BJ (cell line): ENCODE measurements at regions of chr12 and their contacts with region 1.

Region 1: DNA sequence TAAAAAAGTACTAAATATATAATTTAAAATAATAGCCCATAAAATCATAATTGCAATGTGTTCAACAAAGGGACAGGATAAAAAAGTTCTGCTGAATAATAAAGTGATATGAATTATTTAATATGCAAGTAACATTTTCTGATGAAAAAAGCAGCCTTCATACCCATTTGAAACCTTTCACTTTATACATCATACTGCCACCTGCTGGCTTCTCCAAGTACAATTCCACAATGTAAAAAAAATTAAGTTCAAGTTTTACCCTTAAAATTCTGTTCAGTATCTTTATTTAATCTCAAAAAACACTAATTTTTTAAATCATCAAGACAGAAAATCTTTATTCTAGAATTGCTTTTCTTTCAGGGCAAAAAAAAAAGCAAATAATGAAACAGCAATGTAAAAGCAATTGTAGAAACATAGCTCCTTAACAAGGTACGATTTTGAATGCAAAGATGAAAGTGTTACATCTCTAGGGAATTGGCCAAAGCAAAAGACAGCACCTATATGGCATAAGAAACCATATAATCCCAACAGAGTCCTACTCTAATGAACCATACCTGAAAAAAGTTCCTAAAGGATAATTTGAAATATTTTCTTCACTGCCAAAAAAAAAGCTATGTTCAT is 15.0 kb downstream of the MDM1 start:
- DNase-seq: no peak
- H3K4me3 ChIP-seq: no peak overlapping the region
- H3K27me3 ChIP-seq: no peaks in the 10 kb centered on the region
- CTCF ChIP-seq: peak; percentile 52

Region 2: DNA sequence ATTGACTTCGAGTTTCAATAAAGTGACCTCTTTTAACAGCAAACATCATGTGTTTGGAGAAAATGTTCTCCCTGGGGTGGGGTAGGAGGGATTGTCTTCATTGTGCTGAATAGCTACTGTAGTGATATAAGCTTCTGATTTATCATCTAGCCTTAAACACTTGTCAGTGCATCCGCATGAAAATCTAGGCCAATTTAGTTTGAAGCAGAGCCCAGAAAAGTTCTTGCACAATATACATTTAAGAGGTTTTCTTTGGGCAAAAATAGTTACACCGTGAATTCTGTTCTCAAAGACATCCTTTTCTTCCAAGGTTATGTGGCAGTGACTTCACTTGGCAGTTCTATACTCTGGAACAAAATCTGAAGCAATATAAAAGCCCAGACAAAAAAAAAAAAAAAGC is 464.0 kb before region 1 on chr12:
- CTCF ChIA-PET with region 1: no interaction called
- POLR2A ChIA-PET with region 1: no interaction called
- DNase-seq: peak; percentile 56
- H3K4me3 ChIP-seq: no peak overlapping the region
- H3K27me3 ChIP-seq: no peaks in the 10 kb centered on the region
- CTCF ChIP-seq: no peak

Region 3: DNA sequence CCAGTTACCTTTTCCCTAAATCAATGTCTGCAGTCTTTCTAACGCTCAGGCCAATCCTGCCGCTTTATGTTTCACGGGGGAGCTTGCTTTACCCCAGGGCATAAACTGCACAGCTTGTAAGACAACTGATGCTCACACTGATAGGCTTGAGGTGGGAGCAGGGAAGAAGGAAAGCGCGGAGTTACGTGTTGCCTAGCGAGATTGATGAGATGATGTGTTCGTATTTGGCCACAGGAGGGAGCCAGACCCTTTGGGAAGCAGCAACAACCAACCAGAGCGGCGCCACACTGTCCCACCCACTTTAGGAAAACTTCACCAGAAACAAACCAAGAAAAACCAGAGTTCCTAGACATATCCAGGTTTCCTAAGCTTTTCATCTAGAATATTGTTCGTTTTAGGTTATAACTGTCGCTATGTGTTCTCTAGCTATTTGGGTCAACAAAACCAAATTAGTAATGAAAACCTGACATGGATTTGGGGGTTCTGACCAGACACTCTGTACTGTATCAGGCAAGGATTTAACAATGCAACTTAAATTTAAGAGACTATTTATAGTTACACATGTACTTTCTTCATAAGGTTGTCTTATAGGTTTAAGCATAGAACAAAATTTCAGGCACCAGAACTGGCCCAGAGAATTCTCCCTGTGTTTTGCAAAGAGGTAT is 93.9 kb before region 1 on chr12:
- CTCF ChIA-PET with region 1: interaction called, 88 read pairs
- POLR2A ChIA-PET with region 1: no interaction called
- DNase-seq: peak; percentile 30
- H3K4me3 ChIP-seq: no peak overlapping the region
- H3K27me3 ChIP-seq: peaks cover 1% of the 10 kb centered on the region; the same call in 1 of the 2 replicates
- CTCF ChIP-seq: peak; percentile 85

Region 4: GRCh38 chr12:68236421-68237059 is 80.6 kb before region 1 on chr12:
- CTCF ChIA-PET with region 1: interaction called, 22 read pairs
- POLR2A ChIA-PET with region 1: no interaction called
- DNase-seq: no peak
- H3K4me3 ChIP-seq: no peak overlapping the region; the same call in 1 of the 2 replicates
- H3K27me3 ChIP-seq: 0 out of 2 replicates have a peak, but pooled peaks cover 2% of the 10 kb centered on the region
- CTCF ChIP-seq: no peak

Region 5: DNA sequence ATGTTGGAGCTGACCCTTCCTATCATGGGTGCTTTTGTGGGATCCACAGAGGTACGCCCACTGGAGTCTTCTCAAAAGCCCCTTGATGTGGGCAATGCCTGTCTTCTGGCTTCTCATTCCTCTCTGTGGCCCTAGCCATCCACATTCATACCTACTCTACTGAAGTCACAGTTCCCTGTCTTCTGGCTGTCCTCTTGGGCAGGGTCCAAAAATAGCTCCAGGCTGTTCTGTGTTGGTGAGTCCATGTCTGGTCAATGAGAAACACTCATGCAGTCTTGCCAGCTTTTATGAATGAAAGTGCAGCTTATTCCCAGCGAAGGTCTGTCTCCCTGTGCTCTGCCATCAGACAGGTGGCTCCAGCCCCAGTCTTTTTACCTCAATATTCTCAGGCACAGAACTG is 150.9 kb after region 1 on chr12:
- CTCF ChIA-PET with region 1: no interaction called
- POLR2A ChIA-PET with region 1: no interaction called
- DNase-seq: no peak
- H3K4me3 ChIP-seq: no peak overlapping the region
- H3K27me3 ChIP-seq: no peaks in the 10 kb centered on the region
- CTCF ChIP-seq: no peak